ENCODE measurements at regions of chr11 and their contacts with region 1.

Region 1: GRCh38 chr11:77449060-77449521 is 24.8 kb downstream of the PAK1 start:
- DNase-seq: peak; percentile 91
- ATAC-seq: peak; percentile 76
- H3K4me3 ChIP-seq: peak overlapping the region; percentile 8; the same call in 1 of the 2 replicates
- H3K27ac ChIP-seq: peak overlapping the region; percentile 92
- H3K4me1 ChIP-seq: peaks cover 76% of the 10 kb centered on the region
- H3K27me3 ChIP-seq: no peaks in the 10 kb centered on the region
- CTCF ChIP-seq: no peak
- EP300 ChIP-seq: peak in 1 of 2 experiments; percentile 76; a peak in 3 of 4 replicates
- POLR2A ChIP-seq: no peak
- RAD21 ChIP-seq: peak; percentile 14; the same call in 1 of the 2 replicates

Region 2: GRCh38 chr11:77400773-77401449 is 48.2 kb before region 1 on chr11:
- CTCF ChIA-PET with region 1: interaction called, 4 read pairs
- POLR2A ChIA-PET with region 1: interaction called, 3 read pairs
- RAD21 ChIA-PET with region 1: interaction called, 7 read pairs
- SMC1A ChIA-PET with region 1: interaction called, 12 read pairs
- in situ Hi-C with region 1: no loop called
- intact Hi-C with region 1: no loop called
- DNase-seq: no peak
- ATAC-seq: peak; percentile 75
- H3K4me3 ChIP-seq: no peak overlapping the region
- H3K27ac ChIP-seq: peak overlapping the region; percentile 17; the same call in 1 of the 2 replicates
- H3K4me1 ChIP-seq: peaks cover 19% of the 10 kb centered on the region
- H3K27me3 ChIP-seq: no peaks in the 10 kb centered on the region
- CTCF ChIP-seq: peak; percentile 14 to 28 (median 26); a peak in 4 of 6 replicates
- EP300 ChIP-seq: no peak
- POLR2A ChIP-seq: no peak
- RAD21 ChIP-seq: 0 out of 2 replicates have a peak, but pooled peaks have one; percentile 14

Region 3: DNA sequence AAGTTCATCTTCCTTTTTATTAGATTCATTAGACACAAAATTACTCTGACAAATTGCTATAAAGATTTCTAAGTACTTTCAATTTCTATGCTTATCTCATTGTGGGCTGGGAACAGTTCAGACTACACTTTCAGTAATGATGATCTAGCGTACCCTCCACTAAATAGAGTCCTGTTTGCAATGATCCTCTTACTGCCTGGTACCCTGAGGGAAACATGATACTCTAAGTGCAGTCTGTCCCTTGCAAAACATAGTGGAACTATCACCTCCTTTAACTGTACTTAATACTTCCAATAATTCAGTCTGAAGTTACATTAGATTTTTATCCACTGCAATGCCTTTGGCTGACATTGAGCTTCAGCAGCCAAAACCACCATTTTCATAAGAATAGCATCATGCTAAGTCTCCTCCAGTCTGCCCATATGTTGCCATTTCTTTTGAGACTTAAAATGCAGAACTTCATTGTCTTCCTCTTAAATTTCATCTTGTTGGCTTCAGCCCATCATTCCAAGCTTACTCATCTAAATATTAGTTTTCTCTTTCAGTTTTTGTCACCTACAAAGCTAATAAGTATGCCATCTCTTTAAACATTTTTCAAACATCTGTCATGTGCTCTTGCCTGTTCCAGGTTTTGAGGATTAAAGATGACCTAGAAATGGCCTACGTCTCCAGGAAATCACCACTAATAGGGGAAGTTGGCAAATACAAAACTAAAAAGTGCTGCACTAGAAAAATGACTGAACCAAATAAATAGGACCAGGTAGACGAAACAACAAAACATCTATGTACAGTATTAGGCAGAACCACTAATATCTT is 30.7 kb before region 1 on chr11:
- CTCF ChIA-PET with region 1: interaction called, 7 read pairs
- POLR2A ChIA-PET with region 1: interaction called, 4 read pairs
- RAD21 ChIA-PET with region 1: interaction called, 36 read pairs
- SMC1A ChIA-PET with region 1: interaction called, 6 read pairs
- in situ Hi-C with region 1: no loop called
- intact Hi-C with region 1: loop called (anchors 2 kb)
- DNase-seq: no peak
- ATAC-seq: peak; percentile 93
- H3K4me3 ChIP-seq: peak overlapping the region; percentile 31; the same call in 1 of the 2 replicates
- H3K27ac ChIP-seq: peak overlapping the region; percentile 67
- H3K4me1 ChIP-seq: peaks cover 8% of the 10 kb centered on the region
- H3K27me3 ChIP-seq: no peaks in the 10 kb centered on the region
- CTCF ChIP-seq: no peak
- EP300 ChIP-seq: no peak
- POLR2A ChIP-seq: no peak
- RAD21 ChIP-seq: no peak

Region 4: GRCh38 chr11:77424644-77425043 is 24.4 kb before region 1 on chr11:
- CTCF ChIA-PET with region 1: no interaction called
- POLR2A ChIA-PET with region 1: interaction called, 4 read pairs
- RAD21 ChIA-PET with region 1: interaction called, 36 read pairs
- SMC1A ChIA-PET with region 1: interaction called, 12 read pairs
- in situ Hi-C with region 1: no loop called
- intact Hi-C with region 1: loop called (anchors 2 kb)
- DNase-seq: no peak
- ATAC-seq: no peak
- H3K4me3 ChIP-seq: no peak overlapping the region
- H3K27ac ChIP-seq: no peak overlapping the region
- H3K4me1 ChIP-seq: peaks cover under 1% of the 10 kb centered on the region
- H3K27me3 ChIP-seq: no peaks in the 10 kb centered on the region
- CTCF ChIP-seq: no peak
- EP300 ChIP-seq: no peak
- POLR2A ChIP-seq: no peak
- RAD21 ChIP-seq: no peak

Region 5: DNA sequence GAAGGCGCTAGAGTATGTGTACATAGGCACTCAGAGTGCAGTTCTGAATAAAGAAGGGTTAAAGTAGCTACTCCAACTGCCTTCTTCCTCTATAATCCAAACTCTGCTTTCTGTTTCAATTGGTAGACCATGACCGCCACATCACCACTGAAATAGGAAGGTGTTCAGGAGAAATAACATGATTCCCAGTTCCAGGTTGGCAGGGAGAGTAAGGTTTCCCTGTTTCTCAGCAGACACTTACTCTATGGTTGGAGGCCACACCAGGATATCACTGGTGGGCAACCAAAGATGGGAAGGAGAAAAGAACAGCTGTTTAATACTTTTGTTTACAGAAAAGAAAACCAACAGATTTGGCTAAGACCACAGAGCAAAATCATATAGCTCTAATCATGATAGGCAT is 13.1 kb before region 1 on chr11:
- CTCF ChIA-PET with region 1: interaction called, 15 read pairs
- POLR2A ChIA-PET with region 1: interaction called, 33 read pairs
- RAD21 ChIA-PET with region 1: interaction called, 38 read pairs
- SMC1A ChIA-PET with region 1: interaction called, 51 read pairs
- in situ Hi-C with region 1: no loop called
- intact Hi-C with region 1: no loop called
- DNase-seq: no peak
- ATAC-seq: peak; percentile 55
- H3K4me3 ChIP-seq: peak overlapping the region; percentile 50; the same call in 1 of the 2 replicates
- H3K27ac ChIP-seq: peak overlapping the region; percentile 35; the same call in 1 of the 2 replicates
- H3K4me1 ChIP-seq: peaks cover 33% of the 10 kb centered on the region; the same call in 1 of the 2 replicates
- H3K27me3 ChIP-seq: no peaks in the 10 kb centered on the region
- CTCF ChIP-seq: no peak
- EP300 ChIP-seq: no peak
- POLR2A ChIP-seq: no peak
- RAD21 ChIP-seq: no peak